GM10248 (cell line): ENCODE measurements at regions of chr2 and their contacts with region 1.

Region 1: DNA sequence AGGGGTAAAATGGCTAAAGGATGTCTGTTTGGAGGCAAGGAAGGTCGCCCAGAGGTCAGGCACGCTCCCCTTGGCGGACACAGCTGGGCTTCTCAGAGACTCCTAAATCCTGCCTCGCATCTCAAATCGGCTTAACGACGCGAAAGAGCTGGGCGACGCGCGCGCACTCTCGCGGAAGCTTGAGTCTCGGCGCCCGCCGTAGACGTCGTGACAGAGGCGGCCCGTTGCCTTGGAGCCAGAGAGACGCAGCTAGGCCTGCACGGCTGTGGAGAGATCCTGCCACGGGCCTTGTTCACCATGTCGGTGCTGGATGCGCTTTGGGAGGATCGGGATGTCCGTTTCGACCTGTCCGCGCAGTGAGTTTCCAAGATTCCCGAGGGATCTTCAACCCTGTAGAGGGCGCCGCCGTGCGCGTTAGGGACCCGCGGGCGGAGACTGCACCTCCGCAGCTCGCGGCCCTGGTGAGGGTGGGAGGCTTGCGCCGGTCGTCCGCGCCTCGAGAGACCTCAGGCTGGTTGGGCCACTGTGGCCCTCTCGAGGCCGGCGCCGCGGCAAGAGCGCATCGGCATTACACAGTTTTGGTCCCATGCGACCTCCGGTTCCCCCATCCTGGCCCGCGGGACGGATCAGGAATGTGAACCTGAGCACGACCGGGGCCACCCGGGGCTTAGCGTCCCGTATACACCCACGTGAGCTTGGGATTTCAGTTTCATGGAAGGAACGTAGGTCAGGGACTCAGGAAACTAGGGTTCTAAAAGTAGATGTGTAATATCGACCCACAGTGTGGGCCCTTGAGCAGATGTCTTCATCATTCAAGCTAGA is at the start of gene BBS5:
- DNase-seq: peak; percentile 86
- CTCF ChIP-seq: peak; percentile 56

Region 2: DNA sequence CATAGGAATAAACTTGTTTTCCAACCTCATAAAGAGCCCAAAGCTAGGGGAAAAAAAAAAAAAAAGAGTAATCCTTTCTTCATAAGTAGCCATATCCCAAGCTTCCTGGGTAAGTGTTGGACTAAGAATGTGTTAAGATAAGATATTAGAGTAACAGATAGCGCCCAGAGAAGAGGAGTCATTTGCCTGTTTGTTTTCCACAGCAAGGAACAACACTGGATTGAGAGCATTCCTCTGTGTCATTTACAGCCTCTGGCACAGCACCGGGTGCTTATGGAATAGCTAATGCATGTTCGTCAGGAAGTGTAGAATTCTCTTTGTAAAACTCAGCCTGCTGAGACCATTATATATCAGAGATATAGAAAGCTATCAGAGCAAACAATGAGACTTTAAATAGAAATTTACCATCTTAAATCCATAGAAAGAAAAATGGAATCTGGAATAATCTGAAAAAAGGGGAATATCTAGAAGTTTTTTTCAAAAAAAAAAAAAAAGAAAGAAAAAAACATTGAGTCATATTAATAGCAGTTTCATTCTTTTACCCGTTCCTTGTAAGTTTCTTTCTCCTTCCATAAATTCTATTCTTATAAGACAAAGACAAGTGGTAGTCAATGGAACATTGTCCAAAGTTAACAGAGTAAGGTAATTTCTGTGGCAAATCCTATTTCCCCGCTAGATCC is 154.7 kb before region 1 on chr2:
- CTCF ChIA-PET with region 1: no interaction called
- POLR2A ChIA-PET with region 1: no interaction called
- DNase-seq: no peak
- CTCF ChIP-seq: no peak

Region 3: DNA sequence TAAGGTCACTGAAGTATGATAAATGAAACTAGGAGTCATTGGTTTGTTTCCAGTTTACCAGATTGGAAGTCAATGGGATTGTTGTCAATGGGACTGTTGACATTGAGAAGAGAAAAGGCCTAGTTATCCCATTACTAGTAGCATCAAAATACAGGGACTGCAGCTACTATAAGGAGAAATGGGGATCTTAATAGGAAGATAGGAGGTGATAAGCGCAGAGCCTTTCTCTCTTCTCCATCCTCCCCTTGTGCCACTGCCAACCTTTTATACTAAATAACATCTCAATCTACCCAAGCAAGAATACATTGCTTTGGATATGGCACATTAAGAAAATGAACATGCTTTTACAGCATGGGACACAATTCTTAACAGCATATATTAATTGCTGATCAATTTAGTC is 10.6 kb before region 1 on chr2:
- CTCF ChIA-PET with region 1: interaction called, 44 read pairs
- POLR2A ChIA-PET with region 1: no interaction called
- DNase-seq: no peak
- CTCF ChIP-seq: no peak

Region 4: DNA sequence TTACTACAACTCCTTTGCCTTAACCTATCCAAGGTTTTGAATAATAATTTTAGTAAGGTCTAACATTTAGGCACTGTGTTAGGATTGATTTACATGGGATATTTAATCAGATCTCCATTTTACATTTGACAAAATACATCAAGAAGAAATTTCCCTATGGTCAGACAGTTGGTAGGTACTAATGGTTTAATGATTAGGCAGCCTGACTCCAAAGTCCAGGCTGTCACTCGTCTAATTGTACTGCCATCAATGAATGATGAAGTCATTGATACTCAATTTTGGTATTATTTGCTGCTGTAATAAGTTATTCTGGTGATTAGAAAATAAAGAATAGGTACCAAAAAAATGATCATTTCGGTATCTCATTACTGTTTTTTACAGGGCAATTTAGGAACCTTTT is 13.9 kb after region 1 on chr2:
- CTCF ChIA-PET with region 1: interaction called, 12 read pairs
- POLR2A ChIA-PET with region 1: no interaction called
- DNase-seq: no peak
- CTCF ChIP-seq: no peak